Caki2 (cell line): ENCODE measurements at regions of chr3 and their contacts with region 1.

Region 1: GRCh38 chr3:31981206-31982181 is at the starts of genes OSBPL10 and ZNF860:
- DNase-seq: peak; percentile 94
- total RNA-seq, gene OSBPL10: 33.7 and 74.7 TPM in 2 replicates
- total RNA-seq, gene ZNF860: 3.5 and 6.3 TPM in 2 replicates

Region 2: GRCh38 chr3:32106280-32106928 is 124.9 kb after region 1 on chr3 and contains the start of gene GPD1L:
- in situ Hi-C with region 1: loop called (anchors 10 kb)
- DNase-seq: peak; percentile 90
- total RNA-seq, gene GPD1L: 4.3 and 6.3 TPM in 2 replicates